Activated CD8-positive, alpha-beta T cell treated with anti-CD3 and anti-CD28 coated beads for 36 hours (primary cell): ENCODE measurements at regions of chr2 and their contacts with region 1.

Region 1: GRCh38 chr2:197434541-197435513 is at the start of gene SF3B1:
- DNase-seq: peak; percentile 100
- ATAC-seq: peak; percentile 96
- H3K4me3 Mint-ChIP-seq: peak within 1 kb of the TSS; percentile 82
- H3K27ac Mint-ChIP-seq: peak within 1 kb of the TSS; percentile 100
- H3K4me1 Mint-ChIP-seq: peaks cover 37% of the 10 kb centered on the region
- H3K27me3 Mint-ChIP-seq: no peaks in the 10 kb centered on the region
- CTCF ChIP-seq: no peak
- total RNA-seq, gene SF3B1: 235 to 253 TPM

Region 2: DNA sequence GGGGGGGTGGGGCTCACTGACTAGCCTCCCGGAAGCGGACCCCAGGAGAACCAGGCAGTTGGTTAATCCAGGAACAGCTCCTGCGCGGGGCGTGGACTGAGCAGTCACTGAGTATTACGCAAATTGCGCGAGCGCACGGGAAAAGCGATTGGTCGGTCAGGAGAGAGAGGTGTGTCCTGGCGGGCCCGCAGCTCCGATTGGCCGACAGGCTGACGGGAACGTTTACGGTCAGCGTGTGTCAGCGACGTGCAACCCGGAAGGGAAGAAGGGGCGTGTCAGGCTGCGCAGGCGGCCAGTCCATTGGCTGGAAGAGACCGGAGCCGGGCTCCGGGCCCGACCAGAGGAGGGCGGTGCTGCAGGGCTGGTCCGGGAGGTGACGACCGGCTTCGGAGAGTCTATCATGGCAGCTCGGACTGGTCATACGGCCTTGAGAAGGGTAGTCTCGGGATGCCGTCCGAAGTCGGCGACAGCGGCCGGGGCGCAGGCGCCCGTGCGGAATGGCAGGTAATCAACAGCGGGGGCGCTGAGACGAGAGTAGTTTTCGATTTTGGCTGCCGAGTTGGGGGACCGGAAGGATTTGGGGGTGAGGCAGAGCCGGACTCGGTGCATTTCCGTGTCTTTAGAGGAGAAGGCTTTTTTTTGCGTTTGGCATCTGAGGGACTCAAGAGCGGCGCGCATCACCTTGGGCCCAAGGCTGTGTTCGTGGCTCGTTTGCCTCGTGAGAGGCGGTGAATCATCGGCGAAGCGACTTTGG is 18.5 kb after region 1 on chr2 and contains the start of gene COQ10B:
- CTCF ChIA-PET with region 1: interaction called, 6 read pairs
- POLR2A ChIA-PET with region 1: interaction called, 15 read pairs
- intact Hi-C with region 1: loop called (anchors 1 kb)
- DNase-seq: peak; percentile 99
- ATAC-seq: peak; percentile 92
- H3K4me3 Mint-ChIP-seq: peak within 1 kb of the TSS; percentile 92
- H3K27ac Mint-ChIP-seq: peak within 1 kb of the TSS; percentile 99
- H3K4me1 Mint-ChIP-seq: peaks cover 43% of the 10 kb centered on the region
- H3K27me3 Mint-ChIP-seq: no peaks in the 10 kb centered on the region
- CTCF ChIP-seq: no peak
- total RNA-seq, gene COQ10B: 14.0 to 14.6 TPM

Region 3: GRCh38 chr2:197705121-197705911 is 270.5 kb after region 1 on chr2 and contains the start of gene MARS2:
- CTCF ChIA-PET with region 1: no interaction called
- POLR2A ChIA-PET with region 1: interaction called, 3 read pairs
- intact Hi-C with region 1: loop called (anchors 10 kb)
- DNase-seq: peak; percentile 92
- ATAC-seq: peak; percentile 84
- H3K4me3 Mint-ChIP-seq: peak within 1 kb of the TSS; percentile 78
- H3K27ac Mint-ChIP-seq: peak within 1 kb of the TSS; percentile 98
- H3K4me1 Mint-ChIP-seq: peaks cover 36% of the 10 kb centered on the region
- H3K27me3 Mint-ChIP-seq: no peaks in the 10 kb centered on the region
- CTCF ChIP-seq: no peak
- total RNA-seq, gene MARS2: 15.3 to 16.7 TPM

Region 4: DNA sequence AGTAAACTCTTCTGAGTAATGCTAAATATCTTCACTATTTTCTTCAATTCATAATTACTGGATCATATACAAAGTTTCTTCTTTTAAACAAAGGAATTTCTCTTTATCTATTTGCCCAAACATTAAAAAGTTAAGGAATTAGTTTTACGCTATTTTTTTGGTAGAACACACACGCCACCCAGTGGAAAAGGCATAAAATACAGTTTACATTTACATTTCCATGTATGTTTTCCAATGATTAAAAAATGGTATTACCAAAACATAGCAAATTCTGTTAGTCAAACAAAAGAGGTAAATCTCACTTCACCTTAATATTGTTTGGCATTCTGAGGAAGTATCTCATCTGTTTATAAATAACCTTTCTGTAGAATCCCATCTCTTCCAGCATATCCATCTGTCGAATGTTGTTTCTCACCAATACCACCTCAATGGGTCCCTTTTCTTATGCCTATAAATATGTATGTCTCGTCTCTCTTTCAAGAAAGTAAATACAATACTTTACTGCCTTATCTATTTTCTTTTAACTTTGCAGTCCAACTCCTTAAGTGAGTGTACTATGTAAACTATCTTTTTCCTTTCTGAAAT is 343.1 kb after region 1 on chr2:
- CTCF ChIA-PET with region 1: no interaction called
- POLR2A ChIA-PET with region 1: no interaction called
- intact Hi-C with region 1: loop called (anchors 10 kb)
- DNase-seq: peak; percentile 15
- ATAC-seq: no peak
- H3K4me3 Mint-ChIP-seq: no peak overlapping the region
- H3K27ac Mint-ChIP-seq: no peak overlapping the region
- H3K4me1 Mint-ChIP-seq: no peaks in the 10 kb centered on the region
- H3K27me3 Mint-ChIP-seq: peaks cover 2% of the 10 kb centered on the region
- CTCF ChIP-seq: peak; percentile 97